AG04450 (cell line): ENCODE measurements at regions of chr1 and their contacts with region 1.

Region 1: GRCh38 chr1:12596007-12596821 is 21.8 kb downstream of the DHRS3 start:
- DNase-seq: peak; percentile 91
- H3K4me3 ChIP-seq: peak overlapping the region; percentile 39
- H3K27ac ChIP-seq: peak overlapping the region; percentile 99
- H3K27me3 ChIP-seq: no peaks in the 10 kb centered on the region
- CTCF ChIP-seq: no peak

Region 2: DNA sequence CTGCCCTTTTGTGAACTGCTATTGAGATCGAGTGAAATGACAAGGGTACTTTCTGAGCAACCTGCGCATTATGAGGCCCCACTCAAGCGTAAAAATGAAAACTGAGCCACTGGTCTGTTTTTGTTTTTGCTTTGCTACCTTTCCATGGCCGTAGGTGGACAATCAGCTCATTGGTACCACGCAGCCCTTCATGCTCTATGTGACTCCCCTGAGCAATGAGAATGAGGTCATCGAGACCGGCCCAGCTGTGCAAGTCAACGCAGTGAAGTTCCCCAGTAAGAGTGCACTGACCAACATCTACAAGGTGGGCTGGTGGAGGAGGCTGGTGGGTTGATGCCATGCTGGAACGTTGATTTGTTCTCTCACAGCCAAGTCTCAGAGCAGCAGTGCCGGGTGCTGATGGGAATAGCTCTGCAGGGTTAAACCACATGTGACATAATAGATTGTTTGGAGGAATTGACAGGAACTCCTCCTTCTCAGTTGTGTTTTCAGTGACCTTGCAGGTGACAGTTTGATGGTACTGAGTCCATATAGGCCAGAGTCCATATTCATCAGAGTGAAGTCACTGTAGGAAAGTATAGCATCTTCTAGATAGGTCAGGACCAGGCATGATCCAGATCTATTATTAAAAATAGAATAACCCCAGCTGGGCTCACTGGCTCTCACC is 196.1 kb before region 1 on chr1:
- CTCF ChIA-PET with region 1: no interaction called
- POLR2A ChIA-PET with region 1: no interaction called
- DNase-seq: no peak
- H3K4me3 ChIP-seq: no peak overlapping the region
- H3K27ac ChIP-seq: no peak overlapping the region
- H3K27me3 ChIP-seq: no peaks in the 10 kb centered on the region
- CTCF ChIP-seq: no peak

Region 3: GRCh38 chr1:12454406-12455391 is 141.5 kb before region 1 on chr1:
- CTCF ChIA-PET with region 1: no interaction called
- POLR2A ChIA-PET with region 1: no interaction called
- DNase-seq: no peak
- H3K4me3 ChIP-seq: no peak overlapping the region
- H3K27ac ChIP-seq: peak overlapping the region; percentile 57
- H3K27me3 ChIP-seq: no peaks in the 10 kb centered on the region
- CTCF ChIP-seq: no peak

Region 4: DNA sequence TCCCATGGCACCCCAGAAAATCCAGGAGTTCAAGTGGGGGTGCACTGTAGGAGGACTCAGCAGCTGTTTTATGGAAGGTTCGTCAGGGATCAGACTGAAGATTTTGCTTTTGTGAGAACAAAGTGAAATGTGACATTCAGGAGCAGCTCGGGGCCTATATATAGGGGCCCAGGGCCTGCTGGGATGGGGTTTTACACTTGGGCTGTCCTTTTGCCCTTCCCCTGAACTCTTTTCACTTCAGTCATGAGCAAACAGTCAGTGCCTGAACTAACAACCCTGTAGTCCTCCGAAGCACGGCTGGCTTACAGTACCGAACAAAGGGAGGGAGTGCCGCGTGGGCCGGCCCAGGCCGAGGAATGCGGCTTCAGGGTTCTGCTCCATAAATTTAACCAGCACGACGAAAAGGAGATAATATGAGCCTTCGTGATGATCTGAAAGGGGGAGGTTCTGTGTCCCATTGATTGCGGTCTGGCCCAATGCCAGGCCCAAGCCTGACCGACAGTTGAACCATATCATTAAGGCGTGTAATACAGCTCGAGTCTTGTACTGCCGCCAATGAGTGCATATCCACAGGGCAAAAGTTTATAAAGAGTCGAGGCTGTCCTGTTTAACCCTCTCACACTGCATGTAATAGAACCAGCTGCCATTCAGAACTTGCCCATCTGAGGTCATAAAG is 118.1 kb before region 1 on chr1:
- CTCF ChIA-PET with region 1: no interaction called
- POLR2A ChIA-PET with region 1: interaction called, 11 read pairs
- DNase-seq: peak; percentile 99
- H3K4me3 ChIP-seq: no peak overlapping the region
- H3K27ac ChIP-seq: peak overlapping the region; percentile 95
- H3K27me3 ChIP-seq: no peaks in the 10 kb centered on the region
- CTCF ChIP-seq: no peak

Region 5: DNA sequence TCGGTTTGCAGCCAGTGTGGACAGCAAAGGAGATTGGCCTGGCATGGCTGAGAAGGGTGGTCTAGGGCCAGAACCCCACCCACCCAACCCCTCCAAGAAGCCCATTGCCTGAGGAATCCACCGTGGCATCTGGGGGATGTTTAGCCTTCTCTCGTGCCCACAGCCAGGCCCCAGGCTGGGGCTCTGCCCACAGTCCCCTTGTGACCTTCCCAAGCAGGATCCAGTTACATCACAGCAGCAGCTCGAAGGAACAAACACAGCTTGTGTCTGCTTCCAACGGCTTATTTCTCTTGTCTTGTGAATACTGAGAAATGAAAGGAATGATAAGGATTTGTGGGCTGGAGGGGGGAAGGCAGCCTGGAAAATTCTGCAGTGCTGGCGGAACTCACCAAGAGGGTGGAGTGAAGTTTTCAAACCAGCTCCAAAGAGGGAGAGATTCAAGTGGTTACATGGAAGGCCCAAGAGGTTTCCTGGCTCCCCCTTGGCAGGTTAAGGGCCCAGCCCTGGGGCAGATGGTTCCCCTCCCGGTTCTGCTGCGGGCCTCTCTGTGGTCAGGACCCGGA is 39.8 kb before region 1 on chr1:
- CTCF ChIA-PET with region 1: interaction called, 3 read pairs
- POLR2A ChIA-PET with region 1: interaction called, 14 read pairs
- DNase-seq: peak; percentile 85
- H3K4me3 ChIP-seq: no peak overlapping the region
- H3K27ac ChIP-seq: peak overlapping the region; percentile 92
- H3K27me3 ChIP-seq: no peaks in the 10 kb centered on the region
- CTCF ChIP-seq: no peak